ENCODE measurements at regions of chr15 and their contacts with region 1.

Region 1: GRCh38 chr15:34241372-34242330 is 16.8 kb downstream of the EMC4 start:
- DNase-seq: no peak
- H3K4me3 ChIP-seq: no peak overlapping the region
- H3K27ac ChIP-seq: no peak overlapping the region
- H3K27me3 ChIP-seq: no peaks in the 10 kb centered on the region
- CTCF ChIP-seq: peak; percentile 73

Region 2: DNA sequence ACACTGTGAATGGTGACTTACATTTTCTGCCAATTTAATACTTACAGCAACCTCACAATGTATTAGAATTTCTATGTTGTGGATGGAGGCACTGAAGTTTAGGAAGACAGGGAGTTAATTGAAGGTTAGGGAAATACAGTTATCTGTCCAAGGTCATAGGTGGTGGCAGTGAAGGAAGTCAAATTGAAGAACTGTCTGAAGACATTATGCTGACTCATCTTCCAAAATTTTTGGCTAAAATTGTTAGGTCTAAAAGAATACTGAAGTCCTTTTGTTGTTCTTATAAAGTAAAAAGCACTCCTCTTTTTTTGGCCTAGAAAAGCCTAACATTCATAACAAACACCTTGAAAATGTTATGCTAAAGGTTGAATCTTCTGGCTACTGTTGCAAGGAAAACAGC is 10.9 kb after region 1 on chr15:
- CTCF ChIA-PET with region 1: interaction called, 21 read pairs
- POLR2A ChIA-PET with region 1: no interaction called
- DNase-seq: no peak
- H3K4me3 ChIP-seq: no peak overlapping the region
- H3K27ac ChIP-seq: no peak overlapping the region
- H3K27me3 ChIP-seq: no peaks in the 10 kb centered on the region
- CTCF ChIP-seq: no peak

Region 3: GRCh38 chr15:34342737-34343575 is 101.3 kb after region 1 on chr15 and contains the starts of genes NOP10 and NUTM1:
- CTCF ChIA-PET with region 1: interaction called, 10 read pairs
- POLR2A ChIA-PET with region 1: interaction called, 4 read pairs
- DNase-seq: peak; percentile 86
- H3K4me3 ChIP-seq: peak within 1 kb of the TSS; percentile 99
- H3K27ac ChIP-seq: peak within 1 kb of the TSS; percentile 87
- H3K27me3 ChIP-seq: no peaks in the 10 kb centered on the region
- CTCF ChIP-seq: peak; percentile 93
- polyA plus RNA-seq, gene NOP10: 262 and 363 TPM in 2 replicates
- polyA plus RNA-seq, gene NUTM1: not detected in 2 replicates

Region 4: DNA sequence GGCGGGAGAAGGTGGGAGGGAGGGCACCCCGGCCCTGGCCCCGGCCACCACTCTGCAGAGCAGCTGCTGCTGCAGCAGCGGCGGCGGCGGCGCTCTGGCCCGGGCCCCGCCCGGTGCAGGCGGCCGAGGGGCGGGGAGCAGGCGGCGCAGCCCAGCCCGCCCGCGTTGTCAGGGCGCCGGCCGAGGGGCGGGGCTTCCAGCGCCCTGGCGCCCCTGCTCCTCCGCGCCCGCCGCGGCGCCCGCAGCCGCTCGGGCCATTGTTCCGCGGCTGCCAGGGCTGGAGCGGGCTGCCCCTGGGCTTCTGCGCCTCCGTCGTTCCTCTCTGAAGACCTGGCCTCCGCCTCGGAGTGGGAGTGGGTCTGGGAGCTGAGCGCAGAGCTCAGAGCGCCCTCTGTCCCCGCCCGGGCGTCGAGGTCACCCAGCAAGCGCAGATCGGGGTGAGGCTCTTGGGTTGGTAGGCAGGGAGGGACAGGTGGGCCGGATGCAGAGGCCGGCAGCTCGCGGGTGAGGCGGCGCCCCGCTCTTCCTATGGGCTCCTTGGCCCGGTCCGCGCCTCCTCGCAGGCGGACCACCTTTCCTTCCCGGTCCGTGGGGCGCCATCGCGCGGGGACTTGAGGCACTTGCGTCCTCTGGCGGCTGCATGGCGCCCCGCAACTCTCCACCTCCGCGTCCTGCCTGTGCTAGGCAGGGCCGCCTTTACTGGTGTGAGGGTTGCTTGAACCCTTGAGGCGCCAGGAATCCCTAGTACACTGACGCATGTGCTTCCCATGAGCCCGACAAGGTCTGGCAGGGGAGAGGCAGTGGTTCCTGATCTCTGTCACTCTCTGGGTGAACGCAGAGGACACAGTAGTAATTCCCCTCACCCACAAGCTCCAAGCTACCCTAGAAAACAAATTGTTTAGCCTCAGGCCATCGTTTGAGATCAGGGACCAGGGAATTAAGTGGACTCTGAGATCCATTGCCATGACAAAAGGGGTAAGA is 125.7 kb after region 1 on chr15 and contains the start of gene LPCAT4:
- CTCF ChIA-PET with region 1: interaction called, 26 read pairs
- POLR2A ChIA-PET with region 1: no interaction called
- DNase-seq: peak; percentile 53
- H3K4me3 ChIP-seq: peak within 1 kb of the TSS; percentile 96
- H3K27ac ChIP-seq: peak within 1 kb of the TSS; percentile 80
- H3K27me3 ChIP-seq: no peaks in the 10 kb centered on the region
- CTCF ChIP-seq: peak; percentile 95
- polyA plus RNA-seq, gene LPCAT4: 20.4 and 23.2 TPM in 2 replicates

Region 5: GRCh38 chr15:34900748-34901147 is 659.1 kb after region 1 on chr15:
- CTCF ChIA-PET with region 1: no interaction called
- POLR2A ChIA-PET with region 1: no interaction called
- DNase-seq: no peak
- H3K4me3 ChIP-seq: no peak overlapping the region
- H3K27ac ChIP-seq: no peak overlapping the region
- H3K27me3 ChIP-seq: no peaks in the 10 kb centered on the region
- CTCF ChIP-seq: no peak

Measured in AG04450 (cell line).